ENCODE measurements at regions of chr6 and their contacts with region 1.

Region 1: DNA sequence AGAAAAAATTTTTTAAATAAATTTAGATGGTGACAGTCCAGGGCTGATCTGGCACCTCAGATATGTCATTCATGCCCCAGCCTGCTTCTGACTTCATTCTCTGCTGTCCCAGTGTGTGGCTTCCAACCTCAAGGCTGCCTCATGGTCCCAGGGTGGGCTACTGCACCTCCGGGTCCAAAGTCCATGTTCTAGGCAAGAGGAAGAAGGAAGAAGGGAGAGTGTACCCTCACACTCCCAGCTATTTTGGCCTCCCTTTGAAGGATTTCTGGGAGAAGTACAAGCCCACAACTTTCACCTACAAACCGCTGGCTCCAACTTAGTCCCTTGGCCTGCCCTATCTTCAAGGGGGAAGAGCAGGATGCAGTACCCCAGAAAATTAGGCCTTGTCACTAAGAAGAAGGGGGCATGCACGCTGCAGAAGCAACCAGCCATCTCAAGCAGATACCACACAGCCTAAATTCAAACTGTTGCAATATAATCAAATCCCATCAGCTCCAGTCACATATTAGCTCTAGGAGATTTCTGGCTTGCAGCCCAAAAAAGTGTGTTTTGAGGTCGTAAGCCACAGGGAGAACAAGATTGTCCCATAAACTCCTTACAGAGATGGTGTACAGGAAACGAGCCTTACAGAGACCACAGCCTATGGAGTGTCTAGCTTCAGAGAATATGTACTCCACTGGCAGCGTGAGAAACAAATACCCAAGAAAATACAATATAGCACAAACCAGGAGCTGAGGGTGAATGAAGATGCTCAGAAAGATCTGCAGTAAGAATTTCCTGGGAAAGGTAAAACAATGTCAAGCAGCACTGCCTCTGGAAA is 906 bp upstream of the BTN3A2 start:
- DNase-seq: peak; percentile 18
- H3K4me3 Mint-ChIP-seq: no peak overlapping the region
- H3K27ac Mint-ChIP-seq: no peak overlapping the region
- H3K4me1 Mint-ChIP-seq: peaks cover 54% of the 10 kb centered on the region
- H3K27me3 Mint-ChIP-seq: no peaks in the 10 kb centered on the region

Region 2: DNA sequence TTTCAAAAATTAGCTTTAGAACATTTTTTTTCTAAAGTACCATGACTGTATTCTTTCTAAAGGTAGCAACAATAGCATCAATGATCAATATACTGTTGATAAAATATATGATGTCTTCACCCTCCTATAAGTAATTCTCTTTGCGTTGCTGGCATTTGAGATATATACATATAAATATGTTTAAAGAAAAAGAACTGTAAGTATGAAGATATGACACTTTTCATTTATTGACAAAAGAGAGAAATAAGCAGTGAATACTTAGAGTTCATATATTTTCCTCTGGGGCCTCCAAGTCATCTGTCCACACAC is 761.5 kb before region 1 on chr6:
- CTCF ChIA-PET with region 1: no interaction called
- POLR2A ChIA-PET with region 1: no interaction called
- intact Hi-C with region 1: no loop called
- DNase-seq: no peak
- H3K4me3 Mint-ChIP-seq: no peak overlapping the region
- H3K27ac Mint-ChIP-seq: no peak overlapping the region
- H3K4me1 Mint-ChIP-seq: no peaks in the 10 kb centered on the region
- H3K27me3 Mint-ChIP-seq: no peaks in the 10 kb centered on the region

Region 3: DNA sequence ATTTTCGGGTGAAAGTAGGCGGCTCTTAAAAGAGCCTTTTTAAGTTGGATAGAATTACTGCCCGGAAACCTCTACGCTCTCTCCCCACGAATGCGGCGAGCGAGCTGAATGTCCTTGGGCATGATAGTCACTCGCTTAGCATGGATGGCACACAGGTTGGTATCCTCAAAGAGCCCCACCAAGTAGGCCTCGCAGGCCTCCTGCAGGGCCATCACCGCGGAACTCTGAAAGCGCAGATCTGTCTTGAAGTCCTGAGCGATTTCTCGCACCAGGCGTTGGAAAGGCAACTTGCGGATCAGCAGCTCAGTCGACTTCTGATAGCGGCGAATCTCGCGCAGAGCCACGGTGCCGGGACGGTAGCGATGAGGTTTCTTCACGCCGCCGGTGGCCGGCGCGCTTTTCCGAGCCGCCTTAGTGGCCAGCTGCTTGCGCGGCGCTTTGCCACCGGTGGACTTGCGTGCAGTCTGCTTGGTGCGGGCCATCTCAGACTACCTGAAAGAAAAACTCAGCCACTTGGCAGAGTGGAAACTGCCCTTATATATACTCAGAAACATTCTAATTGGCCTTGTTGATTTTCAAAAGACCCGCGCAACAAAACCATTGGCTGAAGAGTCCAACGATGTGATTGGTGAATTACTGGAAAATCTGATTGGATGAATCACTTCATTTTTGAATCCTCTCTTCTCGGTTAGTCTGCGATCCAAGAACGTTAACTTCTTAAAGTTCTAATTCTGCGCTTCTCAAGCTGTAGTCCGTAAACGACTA is 93.0 kb before region 1 on chr6:
- CTCF ChIA-PET with region 1: no interaction called
- POLR2A ChIA-PET with region 1: no interaction called
- intact Hi-C with region 1: no loop called
- DNase-seq: peak; percentile 86
- H3K4me3 Mint-ChIP-seq: no peak overlapping the region
- H3K27ac Mint-ChIP-seq: no peak overlapping the region
- H3K4me1 Mint-ChIP-seq: peaks cover 22% of the 10 kb centered on the region
- H3K27me3 Mint-ChIP-seq: peaks cover 2% of the 10 kb centered on the region

Region 4: GRCh38 chr6:26342106-26343004 is 21.7 kb before region 1 on chr6:
- CTCF ChIA-PET with region 1: no interaction called
- POLR2A ChIA-PET with region 1: no interaction called
- intact Hi-C with region 1: loop called (anchors 1 kb)
- DNase-seq: peak; percentile 65
- H3K4me3 Mint-ChIP-seq: peak overlapping the region; percentile 76
- H3K27ac Mint-ChIP-seq: peak overlapping the region; percentile 69
- H3K4me1 Mint-ChIP-seq: peaks cover 8% of the 10 kb centered on the region
- H3K27me3 Mint-ChIP-seq: peaks cover 5% of the 10 kb centered on the region

Region 5: DNA sequence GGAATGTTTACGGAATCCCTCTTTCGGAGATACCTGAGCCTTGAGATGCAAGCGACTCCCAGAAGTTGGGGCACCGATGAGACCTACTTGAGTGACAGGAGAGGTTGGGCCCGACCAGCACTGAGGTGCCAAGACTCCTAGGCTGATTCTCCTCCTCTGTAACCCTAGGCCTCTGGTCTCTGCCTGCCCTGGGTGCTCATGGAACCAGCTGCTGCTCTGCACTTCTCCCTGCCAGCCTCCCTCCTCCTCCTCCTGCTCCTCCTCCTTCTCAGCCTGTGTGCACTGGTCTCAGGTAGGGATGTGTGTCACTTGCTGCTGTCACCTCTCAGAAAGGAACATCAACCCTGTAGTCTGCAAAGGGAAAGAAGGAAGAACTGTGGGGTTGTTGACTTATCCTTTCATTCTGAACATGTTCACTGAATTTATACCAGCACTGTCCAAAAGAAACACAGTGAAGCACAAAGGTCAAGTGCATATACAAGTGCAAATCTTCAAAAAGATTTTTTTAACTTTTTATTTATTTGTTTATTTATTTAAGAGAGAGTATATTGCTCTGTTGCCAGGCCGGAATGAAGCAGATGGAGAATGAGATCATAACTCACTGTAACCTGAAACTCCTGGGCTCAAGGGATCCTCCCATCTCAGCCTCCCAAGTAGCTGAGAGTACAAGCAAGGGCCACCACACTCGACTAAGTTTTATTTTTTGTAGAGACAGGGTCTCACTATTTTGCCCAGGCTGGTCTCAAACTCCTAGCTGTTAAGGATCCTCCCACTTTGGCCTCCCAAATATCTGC is 19.7 kb after region 1 on chr6:
- CTCF ChIA-PET with region 1: no interaction called
- POLR2A ChIA-PET with region 1: no interaction called
- intact Hi-C with region 1: loop called (anchors 1 kb)
- DNase-seq: peak; percentile 50
- H3K4me3 Mint-ChIP-seq: peak overlapping the region; percentile 100
- H3K27ac Mint-ChIP-seq: peak overlapping the region; percentile 94
- H3K4me1 Mint-ChIP-seq: peaks cover 24% of the 10 kb centered on the region
- H3K27me3 Mint-ChIP-seq: no peaks in the 10 kb centered on the region

Region 6: DNA sequence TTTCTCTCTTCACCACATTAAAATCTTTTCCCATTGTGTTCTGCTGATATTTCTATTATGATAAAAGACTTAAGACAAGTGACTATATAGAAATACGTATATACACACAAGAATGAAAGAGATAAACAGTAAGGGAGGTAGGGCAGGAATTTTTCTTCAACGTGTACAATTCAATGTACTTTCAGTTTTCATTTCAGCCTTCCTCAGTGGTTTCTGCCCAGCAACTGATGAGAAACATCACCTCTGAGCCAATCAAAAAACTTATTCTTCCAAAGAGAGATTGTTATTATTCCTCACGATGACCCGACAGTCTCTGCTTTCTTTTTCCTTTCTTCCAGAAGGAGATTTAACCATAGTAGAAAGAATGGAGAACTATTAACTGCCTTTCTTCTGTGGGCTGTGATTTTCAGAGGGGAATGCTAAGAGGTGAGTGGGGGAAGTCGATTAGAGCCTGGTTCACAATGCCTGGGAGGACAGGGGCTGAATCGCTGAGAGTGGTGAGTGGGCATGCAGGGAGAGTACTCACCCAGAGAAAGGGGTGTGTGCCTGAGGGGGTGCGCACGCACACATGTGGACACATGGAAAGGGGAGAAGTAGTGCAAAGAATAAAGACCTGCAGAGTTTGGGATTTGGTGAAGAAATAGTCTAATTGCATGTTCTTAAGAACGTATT is 38.0 kb after region 1 on chr6 and contains the start of gene BTN3A1:
- CTCF ChIA-PET with region 1: no interaction called
- POLR2A ChIA-PET with region 1: no interaction called
- intact Hi-C with region 1: loop called (anchors 2 kb)
- DNase-seq: peak; percentile 80
- H3K4me3 Mint-ChIP-seq: peak within 1 kb of the TSS; percentile 89
- H3K27ac Mint-ChIP-seq: peak within 1 kb of the TSS; percentile 95
- H3K4me1 Mint-ChIP-seq: peaks cover 47% of the 10 kb centered on the region
- H3K27me3 Mint-ChIP-seq: no peaks in the 10 kb centered on the region
- total RNA-seq, gene BTN3A1: 36.5 to 39.0 TPM

Measured in activated CD4-positive, alpha-beta memory T cell treated with anti-CD3 and anti-CD28 coated beads for 36 hours (primary cell).